ENCODE measurements at regions of chr5 and their contacts with region 1.

Region 1: GRCh38 chr5:139588962-139589361 is 27.8 kb downstream of the UBE2D2 start:
- DNase-seq: no peak
- ATAC-seq: no peak; the same call in 2 of the 3 replicates
- H3K4me3 ChIP-seq: no peak overlapping the region
- H3K27ac ChIP-seq: peak overlapping the region; percentile 3; the same call in 1 of the 3 replicates
- H3K4me1 ChIP-seq: peaks cover 4 to 5% of the 10 kb centered on the region in 2 experiments; a peak in 2 of 5 replicates
- H3K27me3 ChIP-seq: no peaks in the 10 kb centered on the region
- CTCF ChIP-seq: no peak
- EP300 ChIP-seq: no peak
- POLR2A ChIP-seq: no peak
- RAD21 ChIP-seq: no peak

Region 2: DNA sequence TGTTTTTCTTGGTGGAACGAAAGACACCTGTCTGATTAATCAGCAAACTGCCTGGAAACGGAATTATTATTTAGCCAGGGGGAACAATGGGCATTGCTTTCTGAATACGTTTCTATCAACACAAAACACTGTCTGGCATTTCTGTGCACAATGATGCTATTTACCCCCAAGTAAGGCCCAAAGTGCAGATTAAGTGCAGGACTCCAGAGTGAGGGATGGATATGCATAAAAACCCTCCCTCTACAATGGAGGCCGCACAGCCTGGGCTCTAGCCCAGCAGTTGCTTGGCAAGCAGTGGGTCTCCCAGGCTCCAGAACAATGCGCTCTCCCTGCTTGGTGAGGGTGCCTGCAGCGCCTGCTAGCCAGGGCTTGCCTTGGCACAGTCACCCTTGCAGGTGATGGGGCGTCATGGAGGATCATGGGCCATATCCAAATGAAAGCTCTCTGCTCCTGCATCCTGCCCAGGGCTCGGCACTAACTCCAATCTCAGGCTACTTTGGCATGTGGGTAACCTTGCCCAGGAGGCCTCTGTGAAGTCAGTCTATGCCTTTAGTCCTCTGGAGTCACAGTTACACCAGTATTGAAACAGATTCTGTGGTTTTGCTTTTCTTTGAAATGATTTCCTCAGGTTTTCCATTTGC is 173.6 kb before region 1 on chr5:
- CTCF ChIA-PET with region 1: no interaction called
- POLR2A ChIA-PET with region 1: no interaction called
- in situ Hi-C with region 1: no loop called
- intact Hi-C with region 1: no loop called
- DNase-seq: no peak
- ATAC-seq: no peak
- H3K4me3 ChIP-seq: no peak overlapping the region
- H3K27ac ChIP-seq: no peak overlapping the region
- H3K4me1 ChIP-seq: peaks cover 4 to 13% of the 10 kb centered on the region in 2 experiments
- H3K27me3 ChIP-seq: no peaks in the 10 kb centered on the region
- CTCF ChIP-seq: no peak
- EP300 ChIP-seq: no peak; the same call in 1 of the 2 replicates
- POLR2A ChIP-seq: no peak
- RAD21 ChIP-seq: no peak

Region 3: GRCh38 chr5:139574641-139575312 is 14.2 kb before region 1 on chr5:
- CTCF ChIA-PET with region 1: no interaction called
- POLR2A ChIA-PET with region 1: interaction called, 11 read pairs
- in situ Hi-C with region 1: no loop called
- intact Hi-C with region 1: no loop called
- DNase-seq: peak; percentile 30 to 62 (median 32)
- ATAC-seq: peak; percentile 82
- H3K4me3 ChIP-seq: no peak overlapping the region
- H3K27ac ChIP-seq: no peak overlapping the region
- H3K4me1 ChIP-seq: peaks cover 2% of the 10 kb centered on the region in 2 experiments; a peak in 3 of 5 replicates
- H3K27me3 ChIP-seq: no peaks in the 10 kb centered on the region
- CTCF ChIP-seq: peak; percentile 61 to 74 (median 64); a peak in 5 of 6 replicates
- EP300 ChIP-seq: no peak
- POLR2A ChIP-seq: no peak
- RAD21 ChIP-seq: peak; percentile 30 to 58; a peak in 3 of 4 replicates

Measured in K562 (cell line).